Heart left ventricle (tissue), 16 donors: ENCODE measurements at regions of chr3 and their contacts with region 1.

Region 1: GRCh38 chr3:100073899-100074307 is 40.4 kb downstream of the FILIP1L start:
- DNase-seq: peak; percentile 50 to 72 (median 62)
- ATAC-seq: peak in 2 of 4 donors; percentile 54 to 74
- H3K4me3 ChIP-seq: peak overlapping the region in 1 of 12 donors; percentile 9
- H3K27ac ChIP-seq: peak overlapping the region; percentile 42 to 87 (median 66)
- H3K4me1 ChIP-seq: peaks cover 0 to 73% (median 51%) of the 10 kb centered on the region in 12 donors
- H3K27me3 ChIP-seq: no peaks in the 10 kb centered on the region
- CTCF ChIP-seq: no peak
- POLR2A ChIP-seq: no peak

Region 2: GRCh38 chr3:99952306-99952705 is 121.6 kb before region 1 on chr3:
- intact Hi-C with region 1: no loop called
- DNase-seq: no peak
- ATAC-seq: no peak
- H3K4me3 ChIP-seq: no peak overlapping the region
- H3K27ac ChIP-seq: no peak overlapping the region
- H3K4me1 ChIP-seq: peaks cover 0 to 44% (median 24%) of the 10 kb centered on the region in 12 donors
- H3K27me3 ChIP-seq: no peaks in the 10 kb centered on the region
- CTCF ChIP-seq: no peak
- POLR2A ChIP-seq: no peak

Region 3: DNA sequence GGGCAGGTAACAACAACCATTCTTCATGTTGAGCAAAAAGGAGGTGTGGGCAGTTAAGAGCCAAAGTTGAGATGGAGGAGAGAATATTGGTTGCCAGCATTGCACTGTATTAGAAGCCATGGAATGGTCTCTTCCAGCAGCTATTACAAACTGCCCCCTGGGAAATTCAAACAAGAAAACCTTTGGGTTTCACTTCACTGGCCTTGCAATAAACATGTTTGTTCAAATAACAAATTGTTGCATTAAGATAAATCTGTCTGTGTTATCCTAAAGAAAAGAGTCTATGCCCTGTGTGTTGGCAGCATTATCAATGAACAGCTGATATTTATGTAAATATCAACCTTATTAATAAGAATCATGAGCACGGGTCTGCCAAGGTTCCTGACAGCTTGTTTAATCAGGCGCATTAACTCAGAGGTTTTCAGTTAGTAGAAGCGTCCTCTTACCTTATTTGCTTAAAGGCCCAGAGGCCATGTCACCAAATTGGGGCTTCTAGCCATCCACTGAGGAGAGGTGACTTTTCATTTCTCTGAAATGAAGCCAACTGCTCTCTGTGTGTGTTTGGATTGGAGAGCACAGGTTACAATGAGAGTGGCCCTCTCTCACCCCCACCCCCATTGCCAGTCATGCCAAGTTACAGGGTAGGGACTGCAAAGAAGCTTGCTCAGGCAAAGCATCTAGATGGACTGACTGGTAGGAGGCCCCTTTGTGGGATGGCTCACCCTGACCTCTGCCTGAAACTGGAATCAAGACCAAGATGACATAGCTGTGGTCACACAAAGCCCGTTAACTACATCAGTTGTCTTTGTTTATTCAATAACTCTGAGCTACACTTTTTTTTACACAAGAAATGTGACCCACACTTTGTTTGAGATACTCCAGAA is 29.9 kb after region 1 on chr3:
- intact Hi-C with region 1: loop called in 1 of 10 experiments (anchors 5 kb)
- DNase-seq: no peak
- ATAC-seq: peak in 3 of 4 donors; percentile 15 to 24 (median 20)
- H3K4me3 ChIP-seq: no peak overlapping the region
- H3K27ac ChIP-seq: peak overlapping the region in 11 of 12 donors; percentile 33 to 83 (median 74)
- H3K4me1 ChIP-seq: peaks cover 3 to 77% (median 39%) of the 10 kb centered on the region in 12 donors
- H3K27me3 ChIP-seq: no peaks in the 10 kb centered on the region
- CTCF ChIP-seq: no peak
- POLR2A ChIP-seq: no peak

Region 4: GRCh38 chr3:100113723-100114412 is 40.0 kb after region 1 on chr3:
- intact Hi-C with region 1: loop called in 2 of 10 experiments (anchors 5 kb)
- DNase-seq: no peak
- ATAC-seq: peak in 2 of 4 donors; percentile 6 to 52
- H3K4me3 ChIP-seq: peak overlapping the region in 10 of 12 donors; percentile 18 to 57 (median 44)
- H3K27ac ChIP-seq: peak overlapping the region in 10 of 12 donors; percentile 19 to 79 (median 63)
- H3K4me1 ChIP-seq: peaks cover 0 to 24% (median 7%) of the 10 kb centered on the region in 12 donors
- H3K27me3 ChIP-seq: no peaks in the 10 kb centered on the region
- CTCF ChIP-seq: no peak
- POLR2A ChIP-seq: no peak

Region 5: DNA sequence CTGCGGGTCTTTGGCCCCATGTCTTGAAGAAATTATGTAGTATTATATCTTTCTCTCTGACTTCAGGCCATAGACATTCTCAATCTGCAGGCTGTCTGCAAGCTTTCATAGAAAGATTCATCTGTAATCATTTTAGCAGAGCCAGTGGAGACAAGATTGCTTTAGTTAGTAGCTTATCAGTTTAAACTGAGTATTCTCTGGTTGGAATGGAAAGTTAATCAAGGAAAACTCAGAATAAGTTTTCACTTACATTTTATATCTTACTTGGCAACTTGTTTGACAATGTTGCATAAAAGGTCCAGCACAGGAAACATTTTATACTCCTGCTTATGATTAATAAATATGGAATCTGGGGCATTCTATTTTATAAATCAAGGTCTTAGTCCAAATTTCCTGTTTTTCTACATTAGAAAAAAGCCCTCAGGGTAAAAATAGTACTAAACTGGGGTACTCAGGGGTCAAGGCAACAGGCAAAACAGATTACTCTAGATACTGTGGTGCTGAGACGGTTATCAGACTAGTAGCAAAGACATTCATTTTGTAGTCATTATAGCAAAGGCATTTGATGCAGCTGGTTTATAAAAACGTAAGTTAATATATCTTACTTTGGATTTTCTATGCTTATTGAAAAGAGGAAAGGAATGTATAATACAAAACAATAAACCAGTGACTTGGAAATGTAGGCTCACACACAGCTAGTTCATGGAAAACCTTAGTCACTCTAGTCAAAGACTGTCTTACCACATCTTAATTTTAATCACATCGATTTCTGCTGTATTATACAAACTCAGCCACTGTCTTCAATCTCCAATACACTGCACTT is 85.6 kb after region 1 on chr3:
- intact Hi-C with region 1: loop called in 5 of 10 experiments (anchors 5 to 10 kb)
- DNase-seq: no peak
- ATAC-seq: peak in 1 of 4 donors; percentile 28
- H3K4me3 ChIP-seq: no peak overlapping the region
- H3K27ac ChIP-seq: peak overlapping the region; percentile 10 to 80 (median 66)
- H3K4me1 ChIP-seq: peaks cover 0 to 63% (median 44%) of the 10 kb centered on the region in 12 donors
- H3K27me3 ChIP-seq: no peaks in the 10 kb centered on the region
- CTCF ChIP-seq: no peak
- POLR2A ChIP-seq: no peak

Region 6: GRCh38 chr3:100170486-100170885 is 96.6 kb after region 1 on chr3:
- intact Hi-C with region 1: loop called in 3 of 10 experiments (anchors 5 to 10 kb)
- DNase-seq: peak in 1 of 5 donors; percentile 39
- ATAC-seq: peak in 3 of 4 donors; percentile 34 to 70 (median 68)
- H3K4me3 ChIP-seq: no peak overlapping the region
- H3K27ac ChIP-seq: peak overlapping the region in 5 of 12 donors; percentile 5 to 65 (median 41)
- H3K4me1 ChIP-seq: peaks cover 0 to 37% (median 17%) of the 10 kb centered on the region in 12 donors
- H3K27me3 ChIP-seq: no peaks in the 10 kb centered on the region
- CTCF ChIP-seq: no peak
- POLR2A ChIP-seq: no peak

Region 7: DNA sequence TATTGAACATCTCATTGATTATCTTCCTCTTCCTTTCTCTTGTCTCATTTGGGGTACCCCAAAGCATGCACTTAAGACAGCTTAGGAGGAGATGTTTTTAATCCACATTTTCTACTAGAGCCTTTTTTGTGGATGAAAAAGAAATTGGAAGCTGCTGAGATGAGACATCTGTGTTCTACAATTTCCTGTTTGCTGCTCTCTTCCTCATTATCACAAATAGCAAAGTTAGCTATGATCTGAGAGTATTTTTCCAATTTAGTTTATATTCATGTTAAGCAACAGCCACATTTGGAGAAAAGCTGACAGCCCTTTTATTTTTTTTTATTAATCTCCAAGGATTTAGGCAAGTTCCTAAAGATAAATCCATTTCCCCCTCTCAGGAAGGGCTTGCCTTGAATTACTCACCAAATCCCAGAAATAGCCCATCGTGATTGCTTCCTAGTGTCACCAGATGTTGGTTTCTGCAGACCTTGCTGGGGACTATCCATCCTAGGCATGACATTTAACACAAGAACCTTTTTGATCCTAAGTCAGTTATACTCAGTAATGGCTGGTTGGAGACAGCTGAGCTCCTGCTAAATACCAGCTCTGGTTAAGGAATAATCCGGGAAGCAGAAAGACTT is 111.2 kb after region 1 on chr3:
- intact Hi-C with region 1: loop called in 2 of 10 experiments (anchors 5 to 10 kb)
- DNase-seq: peak in 1 of 5 donors; percentile 21
- ATAC-seq: peak in 3 of 4 donors; percentile 51 to 88 (median 68)
- H3K4me3 ChIP-seq: no peak overlapping the region
- H3K27ac ChIP-seq: peak overlapping the region in 11 of 12 donors; percentile 2 to 73 (median 26)
- H3K4me1 ChIP-seq: peaks cover 0 to 24% (median 17%) of the 10 kb centered on the region in 12 donors
- H3K27me3 ChIP-seq: no peaks in the 10 kb centered on the region
- CTCF ChIP-seq: no peak
- POLR2A ChIP-seq: no peak

Region 8: GRCh38 chr3:100525753-100526612 is 452.1 kb after region 1 on chr3:
- intact Hi-C with region 1: no loop called
- DNase-seq: peak in 2 of 5 donors; percentile 8 to 48
- ATAC-seq: peak; percentile 37 to 88 (median 63)
- H3K4me3 ChIP-seq: no peak overlapping the region
- H3K27ac ChIP-seq: peak overlapping the region in 8 of 12 donors; percentile 10 to 69 (median 32)
- H3K4me1 ChIP-seq: peaks cover 0 to 9% (median 0%) of the 10 kb centered on the region in 12 donors
- H3K27me3 ChIP-seq: no peaks in the 10 kb centered on the region
- CTCF ChIP-seq: no peak
- POLR2A ChIP-seq: no peak